ENCODE measurements at regions of chr11 and their contacts with region 1.

Region 1: DNA sequence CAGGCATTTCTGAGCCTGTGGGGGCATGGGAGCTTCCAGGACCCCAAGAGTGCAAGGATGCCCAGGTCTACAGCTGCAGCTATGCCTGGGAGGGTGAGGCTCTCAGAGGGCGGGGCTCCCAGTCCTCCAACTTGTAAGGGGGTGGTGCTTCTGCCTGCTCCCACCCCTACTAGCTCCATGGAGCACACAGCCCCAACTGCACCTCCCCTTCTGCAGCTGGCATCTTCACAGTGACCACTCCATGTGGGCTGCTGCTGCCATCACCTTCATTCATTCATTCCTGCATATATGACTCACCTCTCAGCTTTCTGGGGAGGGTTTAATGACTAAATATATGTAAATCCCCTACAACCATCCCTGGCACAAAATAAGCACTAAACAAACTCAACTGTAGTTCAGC is 43.8 kb downstream of the CHST1 start:
- DNase-seq: no peak
- H3K4me3 ChIP-seq: no peak overlapping the region
- H3K27ac ChIP-seq: no peak overlapping the region
- H3K27me3 ChIP-seq: peaks cover 0 to 5% (median 0%) of the 10 kb centered on the region in 45 donors
- CTCF ChIP-seq: no peak

Region 2: GRCh38 chr11:45423475-45424120 is 198.0 kb before region 1 on chr11:
- intact Hi-C with region 1: no loop called
- DNase-seq: no peak
- H3K4me3 ChIP-seq: no peak overlapping the region
- H3K27ac ChIP-seq: peak overlapping the region in 33 of 59 donors; percentile 1 to 83 (median 60)
- H3K27me3 ChIP-seq: peaks cover 0 to 8% (median 0%) of the 10 kb centered on the region in 45 donors
- CTCF ChIP-seq: no peak

Region 3: DNA sequence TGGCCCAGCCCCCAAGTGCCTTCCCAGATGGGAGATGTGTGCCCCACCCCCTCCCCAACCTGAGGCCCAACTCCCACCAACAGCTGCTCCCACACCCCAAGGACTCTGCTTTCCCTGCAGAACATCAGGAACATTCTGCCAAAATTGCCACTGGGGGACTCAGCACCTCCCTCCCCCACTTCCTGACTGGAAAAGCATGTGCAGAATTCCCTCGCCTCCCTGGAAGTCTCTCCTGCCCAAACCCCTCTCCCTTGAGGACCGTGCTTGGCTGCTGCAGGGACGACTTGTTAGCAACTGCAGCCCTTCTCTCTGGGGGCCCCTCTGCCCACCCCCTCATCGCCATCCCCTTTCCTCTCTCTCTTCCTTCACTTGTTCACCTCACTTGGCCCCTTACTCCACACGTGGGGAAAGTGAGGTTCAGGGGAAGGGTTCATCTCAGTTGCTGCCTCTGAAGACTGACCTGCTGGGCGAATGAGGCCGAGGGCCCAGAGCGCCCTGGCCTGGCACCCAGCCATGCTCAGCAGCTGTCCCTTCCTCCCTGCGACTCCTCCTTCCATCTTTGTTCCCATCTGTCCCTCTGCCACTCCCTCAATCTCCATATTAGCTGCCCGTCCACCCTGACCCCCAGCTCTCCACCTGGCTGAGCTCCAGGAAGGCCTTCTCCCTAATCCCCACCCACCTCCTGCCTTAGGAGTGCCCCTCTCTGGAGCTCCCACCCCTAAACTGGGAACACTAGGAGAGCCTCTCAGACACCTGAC is 61.3 kb before region 1 on chr11:
- intact Hi-C with region 1: loop called in 1 of 2 experiments (anchors 10 kb)
- DNase-seq: peak in 1 of 10 donors; percentile 9
- H3K4me3 ChIP-seq: no peak overlapping the region
- H3K27ac ChIP-seq: no peak overlapping the region
- H3K27me3 ChIP-seq: peaks cover 0 to 5% (median 0%) of the 10 kb centered on the region in 45 donors
- CTCF ChIP-seq: no peak